ENCODE measurements at regions of chr15 and their contacts with region 1.

Region 1: DNA sequence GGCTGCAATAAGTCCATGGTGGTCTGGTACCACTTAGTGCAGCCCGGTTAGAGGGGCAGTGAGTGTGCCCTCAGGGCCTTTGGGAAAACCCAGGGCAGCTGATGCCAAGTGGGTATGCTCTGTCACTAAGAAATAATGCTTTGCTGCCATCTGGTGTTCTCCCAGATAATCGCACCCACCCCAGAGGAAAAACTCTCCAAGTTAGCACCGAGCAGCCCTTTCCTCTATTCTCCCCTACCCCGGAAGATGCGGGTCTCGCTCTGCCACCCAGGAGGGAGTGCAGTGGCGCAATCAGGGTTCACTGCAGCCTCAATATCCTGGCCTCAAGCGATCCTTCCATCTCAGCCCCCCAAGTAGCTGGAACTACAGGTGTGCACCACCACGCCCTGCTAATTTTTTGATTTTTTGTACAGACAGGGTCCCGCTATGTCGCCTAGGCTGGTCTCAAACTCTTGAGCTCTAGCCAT is 21.3 kb upstream of the DAPK2 start:
- DNase-seq: peak in 5 of 6 donors; percentile 53 to 80 (median 67)
- ATAC-seq: peak; percentile 64 to 79 (median 74)
- H3K4me3 ChIP-seq: no peak overlapping the region
- H3K27ac ChIP-seq: no peak overlapping the region
- H3K4me1 ChIP-seq: peaks cover 12 to 32% (median 23%) of the 10 kb centered on the region in 3 donors
- H3K27me3 ChIP-seq: no peaks in the 10 kb centered on the region
- CTCF ChIP-seq: peak; percentile 60 to 82 (median 75)

Region 2: DNA sequence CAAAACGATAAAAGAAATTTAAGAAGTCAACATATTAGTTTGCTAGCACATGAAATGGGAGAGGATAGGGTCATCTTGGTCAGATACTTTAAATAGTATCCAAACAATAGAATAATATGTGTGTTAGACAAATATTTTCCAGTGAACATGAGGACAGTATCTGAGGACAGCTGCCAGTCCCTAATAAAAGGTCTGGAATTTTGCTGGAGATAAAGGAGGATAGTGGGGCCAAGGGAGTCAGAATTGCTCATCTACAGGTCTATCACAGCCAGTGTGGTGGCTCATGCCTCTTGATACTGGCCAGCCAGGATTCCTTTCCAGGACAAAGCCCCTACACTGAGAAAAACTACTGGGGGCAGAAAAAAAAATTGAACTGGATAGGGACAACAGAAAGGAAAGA is 307.8 kb before region 1 on chr15:
- intact Hi-C with region 1: loop called in 2 of 3 experiments (anchors 5 kb)
- DNase-seq: no peak
- ATAC-seq: no peak
- H3K4me3 ChIP-seq: no peak overlapping the region
- H3K27ac ChIP-seq: no peak overlapping the region
- H3K4me1 ChIP-seq: peaks cover 0 to 14% (median 6%) of the 10 kb centered on the region in 3 donors
- H3K27me3 ChIP-seq: no peaks in the 10 kb centered on the region
- CTCF ChIP-seq: no peak

Region 3: GRCh38 chr15:64702816-64703646 is 635.4 kb after region 1 on chr15:
- intact Hi-C with region 1: no loop called
- DNase-seq: peak; percentile 96 to 100 (median 98)
- ATAC-seq: peak; percentile 96 to 98 (median 97)
- H3K4me3 ChIP-seq: peak overlapping the region; percentile 59 to 83 (median 76)
- H3K27ac ChIP-seq: peak overlapping the region; percentile 6 to 84 (median 62)
- H3K4me1 ChIP-seq: peaks cover 22 to 43% (median 24%) of the 10 kb centered on the region in 3 donors
- H3K27me3 ChIP-seq: no peaks in the 10 kb centered on the region
- CTCF ChIP-seq: no peak

Measured in pancreas (tissue), 10 donors.